ENCODE measurements at regions of chr12 and their contacts with region 1.

Region 1: GRCh38 chr12:93742110-93742934 is 65.1 kb downstream of the CRADD start:
- DNase-seq: peak; percentile 74
- ATAC-seq: peak; percentile 98
- H3K4me3 Mint-ChIP-seq: peak overlapping the region; percentile 81
- H3K27ac Mint-ChIP-seq: peak overlapping the region; percentile 92
- H3K4me1 Mint-ChIP-seq: peaks cover 34% of the 10 kb centered on the region
- H3K27me3 Mint-ChIP-seq: peaks cover 3% of the 10 kb centered on the region

Region 2: GRCh38 chr12:93403988-93404803 is 338.1 kb before region 1 on chr12:
- CTCF ChIA-PET with region 1: no interaction called
- POLR2A ChIA-PET with region 1: no interaction called
- DNase-seq: no peak
- ATAC-seq: no peak
- H3K4me3 Mint-ChIP-seq: no peak overlapping the region
- H3K27ac Mint-ChIP-seq: no peak overlapping the region
- H3K4me1 Mint-ChIP-seq: peaks cover 6% of the 10 kb centered on the region
- H3K27me3 Mint-ChIP-seq: no peaks in the 10 kb centered on the region

Region 3: DNA sequence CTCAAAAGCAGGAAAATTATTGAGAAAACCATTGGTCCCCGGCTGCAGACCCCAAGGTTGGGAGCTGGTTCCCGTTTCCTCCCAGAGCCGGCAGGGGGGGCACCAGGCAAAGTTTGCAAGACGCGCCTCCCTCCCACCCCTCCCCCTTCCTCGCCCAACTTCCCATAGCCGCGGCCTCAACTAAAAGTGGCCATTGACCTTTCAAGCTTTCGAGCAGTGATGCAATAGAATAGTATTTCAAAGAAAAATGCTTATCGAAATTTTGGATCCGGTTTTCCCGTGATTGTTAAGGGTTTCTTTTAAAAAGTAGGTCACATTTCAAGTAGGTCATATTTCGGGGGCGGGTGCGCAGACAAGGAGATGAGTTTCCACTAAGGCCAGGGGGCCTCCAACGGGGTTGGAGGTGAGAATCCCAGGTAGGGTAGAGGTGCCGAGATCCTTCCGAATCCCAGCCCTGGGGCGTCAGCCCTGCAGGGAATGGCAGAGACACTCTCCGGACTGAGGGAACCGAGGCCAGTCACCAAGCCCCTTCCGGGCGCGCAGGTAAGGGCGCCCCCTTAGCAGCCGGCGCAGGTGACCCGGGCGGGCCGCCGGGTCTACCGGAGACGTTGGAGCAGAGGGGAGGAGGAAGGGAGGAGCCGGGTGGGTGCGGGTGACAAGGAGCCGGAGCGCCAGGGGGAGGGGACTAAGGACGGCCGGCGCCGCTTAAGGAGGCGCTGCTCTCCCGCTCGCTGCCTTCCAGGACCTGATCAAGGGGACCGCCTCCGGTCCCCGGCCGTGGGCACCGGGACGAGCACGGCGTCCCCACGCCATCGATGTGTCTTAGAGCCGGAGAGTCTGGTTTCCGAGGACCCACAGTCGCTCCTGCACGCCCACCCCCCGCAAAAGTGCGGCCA is 172.4 kb before region 1 on chr12:
- CTCF ChIA-PET with region 1: interaction called, 25 read pairs
- POLR2A ChIA-PET with region 1: no interaction called
- DNase-seq: peak; percentile 87
- ATAC-seq: peak; percentile 62
- H3K4me3 Mint-ChIP-seq: peak overlapping the region; percentile 91
- H3K27ac Mint-ChIP-seq: peak overlapping the region; percentile 90
- H3K4me1 Mint-ChIP-seq: peaks cover 37% of the 10 kb centered on the region
- H3K27me3 Mint-ChIP-seq: peaks cover 7% of the 10 kb centered on the region

Region 4: GRCh38 chr12:93972411-93973208 is 230.3 kb after region 1 on chr12:
- CTCF ChIA-PET with region 1: no interaction called
- POLR2A ChIA-PET with region 1: no interaction called
- DNase-seq: no peak
- ATAC-seq: no peak
- H3K4me3 Mint-ChIP-seq: no peak overlapping the region
- H3K27ac Mint-ChIP-seq: no peak overlapping the region
- H3K4me1 Mint-ChIP-seq: peaks cover 17% of the 10 kb centered on the region
- H3K27me3 Mint-ChIP-seq: peaks cover 4% of the 10 kb centered on the region